Activated CD4-positive, alpha-beta T cell treated with anti-CD3 and anti-CD28 coated beads for 36 hours (primary cell): ENCODE measurements at regions of chr6 and their contacts with region 1.

Region 1: GRCh38 chr6:5214570-5215052 is 46.1 kb downstream of the LYRM4 start:
- DNase-seq: peak; percentile 66
- ATAC-seq: peak; percentile 65
- H3K4me3 Mint-ChIP-seq: no peak overlapping the region
- H3K27ac Mint-ChIP-seq: no peak overlapping the region
- H3K4me1 Mint-ChIP-seq: peaks cover 10% of the 10 kb centered on the region
- H3K27me3 Mint-ChIP-seq: no peaks in the 10 kb centered on the region

Region 2: GRCh38 chr6:5379647-5380242 is 165.1 kb after region 1 on chr6:
- CTCF ChIA-PET with region 1: interaction called, 7 read pairs
- POLR2A ChIA-PET with region 1: no interaction called
- intact Hi-C with region 1: loop called in 1 of 2 experiments (anchors 1 kb)
- DNase-seq: peak; percentile 59
- ATAC-seq: peak; percentile 33
- H3K4me3 Mint-ChIP-seq: no peak overlapping the region
- H3K27ac Mint-ChIP-seq: no peak overlapping the region
- H3K4me1 Mint-ChIP-seq: peaks cover 3% of the 10 kb centered on the region
- H3K27me3 Mint-ChIP-seq: no peaks in the 10 kb centered on the region

Region 3: GRCh38 chr6:5435449-5435848 is 220.8 kb after region 1 on chr6:
- CTCF ChIA-PET with region 1: no interaction called
- POLR2A ChIA-PET with region 1: no interaction called
- intact Hi-C with region 1: no loop called
- DNase-seq: no peak
- ATAC-seq: no peak
- H3K4me3 Mint-ChIP-seq: no peak overlapping the region
- H3K27ac Mint-ChIP-seq: no peak overlapping the region
- H3K4me1 Mint-ChIP-seq: peaks cover 7% of the 10 kb centered on the region
- H3K27me3 Mint-ChIP-seq: no peaks in the 10 kb centered on the region